ENCODE measurements at regions of chr3 and their contacts with region 1.

Region 1: DNA sequence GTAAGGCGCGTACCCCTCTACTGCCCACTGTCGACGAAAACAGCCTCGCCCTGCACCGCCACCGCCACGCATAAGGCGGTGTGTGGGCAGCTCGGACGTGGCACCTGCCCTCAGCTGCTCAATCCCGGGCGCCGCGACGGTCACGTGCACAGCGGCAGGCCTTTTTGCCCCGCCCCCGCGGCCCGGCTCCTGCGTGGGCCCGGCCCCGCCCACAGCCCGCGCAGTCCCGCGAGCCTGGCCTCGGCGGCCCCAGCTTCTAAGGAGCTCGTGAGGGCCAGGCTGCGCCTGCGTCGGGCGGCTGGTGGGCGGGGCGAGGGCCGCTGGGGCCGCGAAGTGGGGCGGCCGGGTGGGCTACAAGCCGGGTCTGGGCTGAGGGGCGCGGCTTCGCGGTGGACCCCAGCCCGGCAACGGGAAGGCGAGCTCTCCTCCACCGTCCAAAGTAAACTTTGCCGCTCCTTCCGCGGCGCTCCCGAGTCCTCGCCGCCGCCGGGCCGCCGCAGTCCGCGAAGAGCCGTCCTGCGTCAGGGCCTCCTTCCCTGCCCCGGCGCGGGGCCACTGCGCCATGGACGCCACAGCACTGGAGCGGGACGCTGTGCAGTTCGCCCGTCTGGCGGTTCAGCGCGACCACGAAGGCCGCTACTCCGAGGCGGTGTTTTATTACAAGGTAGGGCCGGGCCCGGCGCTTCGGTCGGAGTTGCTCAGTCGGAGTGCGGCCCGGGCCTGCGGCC is at the start of gene CAPN7:
- DNase-seq: peak; percentile 98
- H3K4me3 ChIP-seq: peak within 1 kb of the TSS; percentile 69 to 94 (median 87)
- H3K27ac ChIP-seq: peak within 1 kb of the TSS; percentile 66
- H3K4me1 ChIP-seq: peaks cover 6% of the 10 kb centered on the region
- H3K27me3 ChIP-seq: no peaks in the 10 kb centered on the region
- CTCF ChIP-seq: peak; percentile 31 to 50
- POLR2A ChIP-seq: peak; percentile 86
- total RNA-seq, gene CAPN7: 28.8 and 32.7 TPM in 2 replicates

Region 2: GRCh38 chr3:14301558-14301957 is 904.5 kb before region 1 on chr3:
- CTCF ChIA-PET with region 1: no interaction called
- POLR2A ChIA-PET with region 1: no interaction called
- dilution Hi-C with region 1: no loop called
- intact Hi-C with region 1: no loop called
- DNase-seq: no peak
- H3K4me3 ChIP-seq: no peak overlapping the region
- H3K27ac ChIP-seq: no peak overlapping the region
- H3K4me1 ChIP-seq: no peaks in the 10 kb centered on the region
- H3K27me3 ChIP-seq: peaks cover 6 to 10% of the 10 kb centered on the region in 2 experiments
- CTCF ChIP-seq: no peak
- POLR2A ChIP-seq: no peak

Region 3: GRCh38 chr3:14660907-14661306 is 545.2 kb before region 1 on chr3:
- CTCF ChIA-PET with region 1: no interaction called
- POLR2A ChIA-PET with region 1: no interaction called
- dilution Hi-C with region 1: no loop called
- intact Hi-C with region 1: no loop called
- DNase-seq: no peak
- H3K4me3 ChIP-seq: no peak overlapping the region
- H3K27ac ChIP-seq: no peak overlapping the region
- H3K4me1 ChIP-seq: no peaks in the 10 kb centered on the region
- H3K27me3 ChIP-seq: no peaks in the 10 kb centered on the region
- CTCF ChIP-seq: no peak
- POLR2A ChIP-seq: no peak

Region 4: DNA sequence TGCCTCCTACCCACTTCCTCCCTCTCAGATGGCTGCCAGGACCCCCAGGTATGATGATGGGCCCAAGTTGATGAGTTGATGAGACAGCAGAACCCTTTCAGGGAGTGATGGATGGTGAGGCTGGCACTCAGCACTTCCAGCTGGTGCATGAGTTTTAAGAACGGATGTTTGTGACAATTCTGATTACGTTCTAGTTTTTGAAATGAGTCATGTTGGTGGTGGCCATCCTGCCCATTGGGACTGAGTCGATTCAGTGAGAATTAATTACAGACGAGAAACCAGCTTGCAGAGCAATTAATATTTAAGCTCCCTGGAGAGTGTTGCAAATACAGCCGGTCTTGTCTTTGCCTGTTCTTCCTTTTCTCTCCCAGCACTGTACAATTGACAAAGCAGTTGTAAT is 315.6 kb before region 1 on chr3:
- CTCF ChIA-PET with region 1: no interaction called
- POLR2A ChIA-PET with region 1: no interaction called
- dilution Hi-C with region 1: no loop called
- intact Hi-C with region 1: no loop called
- DNase-seq: peak; percentile 40
- H3K4me3 ChIP-seq: no peak overlapping the region
- H3K27ac ChIP-seq: no peak overlapping the region
- H3K4me1 ChIP-seq: peaks cover 9% of the 10 kb centered on the region
- H3K27me3 ChIP-seq: no peaks in the 10 kb centered on the region
- CTCF ChIP-seq: no peak
- POLR2A ChIP-seq: no peak

Region 5: GRCh38 chr3:15120986-15121385 is 85.1 kb before region 1 on chr3:
- CTCF ChIA-PET with region 1: interaction called, 14 read pairs
- POLR2A ChIA-PET with region 1: no interaction called
- dilution Hi-C with region 1: no loop called
- intact Hi-C with region 1: no loop called
- DNase-seq: no peak
- H3K4me3 ChIP-seq: no peak overlapping the region
- H3K27ac ChIP-seq: no peak overlapping the region
- H3K4me1 ChIP-seq: no peaks in the 10 kb centered on the region
- H3K27me3 ChIP-seq: no peaks in the 10 kb centered on the region
- CTCF ChIP-seq: no peak
- POLR2A ChIP-seq: no peak

Region 6: GRCh38 chr3:15228147-15228546 is 22.0 kb after region 1 on chr3:
- CTCF ChIA-PET with region 1: no interaction called
- POLR2A ChIA-PET with region 1: no interaction called
- dilution Hi-C with region 1: no loop called
- intact Hi-C with region 1: no loop called
- DNase-seq: no peak
- H3K4me3 ChIP-seq: no peak overlapping the region
- H3K27ac ChIP-seq: no peak overlapping the region
- H3K4me1 ChIP-seq: no peaks in the 10 kb centered on the region
- H3K27me3 ChIP-seq: no peaks in the 10 kb centered on the region
- CTCF ChIP-seq: no peak
- POLR2A ChIP-seq: no peak

Region 7: DNA sequence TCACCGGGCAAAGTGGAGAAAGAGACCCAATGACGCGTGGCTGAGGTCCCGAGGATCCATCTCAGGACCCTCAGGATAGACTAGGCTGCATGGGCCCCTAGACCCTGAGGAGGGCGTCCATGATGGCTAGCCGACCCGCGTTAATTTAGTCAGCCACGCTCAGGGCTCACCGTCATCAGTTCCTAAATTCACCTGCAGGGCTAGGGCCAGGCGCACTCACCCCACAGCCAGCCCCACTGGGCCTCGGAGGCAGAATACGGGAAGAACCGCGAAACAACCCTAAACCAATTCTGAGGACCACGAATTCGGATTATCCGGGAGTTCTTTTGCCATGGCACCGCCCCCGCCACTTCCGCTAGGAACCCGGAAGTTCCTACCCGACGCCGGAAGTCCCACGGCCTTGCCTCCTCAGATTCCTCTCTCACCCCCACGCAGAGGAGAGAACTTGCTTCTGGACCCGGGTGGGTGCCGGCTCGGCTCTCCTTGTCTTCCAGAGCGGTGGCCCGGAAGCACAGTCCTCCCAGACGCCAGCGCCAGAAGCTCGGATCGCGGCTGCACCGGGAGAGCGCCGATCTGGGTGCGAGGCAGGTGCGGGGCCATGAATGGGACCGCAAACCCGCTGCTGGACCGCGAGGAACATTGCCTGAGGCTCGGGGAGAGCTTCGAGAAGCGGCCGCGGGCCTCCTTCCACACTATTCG is 221.2 kb after region 1 on chr3 and contains the starts of genes EAF1 and METTL6:
- CTCF ChIA-PET with region 1: no interaction called
- POLR2A ChIA-PET with region 1: no interaction called
- dilution Hi-C with region 1: no loop called
- intact Hi-C with region 1: loop called (anchors 1 kb)
- DNase-seq: peak; percentile 72
- H3K4me3 ChIP-seq: peak within 1 kb of the TSS; percentile 70 to 90 (median 86)
- H3K27ac ChIP-seq: peak within 1 kb of the TSS; percentile 47
- H3K4me1 ChIP-seq: peaks cover 17% of the 10 kb centered on the region
- H3K27me3 ChIP-seq: no peaks in the 10 kb centered on the region
- CTCF ChIP-seq: peak; percentile 4 to 28
- POLR2A ChIP-seq: peak; percentile 66
- total RNA-seq, gene EAF1: 16.0 and 18.2 TPM in 2 replicates
- total RNA-seq, gene METTL6: 11.7 and 19.5 TPM in 2 replicates

Region 8: GRCh38 chr3:15815696-15816095 is 609.6 kb after region 1 on chr3:
- CTCF ChIA-PET with region 1: interaction called, 5 read pairs
- POLR2A ChIA-PET with region 1: no interaction called
- dilution Hi-C with region 1: no loop called
- intact Hi-C with region 1: loop called (anchors 1 kb)
- DNase-seq: peak; percentile 61
- H3K4me3 ChIP-seq: no peak overlapping the region
- H3K27ac ChIP-seq: no peak overlapping the region
- H3K4me1 ChIP-seq: no peaks in the 10 kb centered on the region
- H3K27me3 ChIP-seq: no peaks in the 10 kb centered on the region
- CTCF ChIP-seq: peak; percentile 5 to 21
- POLR2A ChIP-seq: no peak